CD8-positive, alpha-beta memory T cell (primary cell): ENCODE measurements at regions of chr10 and their contacts with region 1.

Region 1: GRCh38 chr10:44386546-44387052 is 1.7 kb upstream of the CXCL12 start:
- DNase-seq: peak in 4 of 5 donors; percentile 7 to 17 (median 12)
- H3K4me3 ChIP-seq: no peak overlapping the region
- H3K4me3 Mint-ChIP-seq: no peak overlapping the region
- H3K27ac ChIP-seq: no peak overlapping the region
- H3K27ac Mint-ChIP-seq: no peak overlapping the region
- H3K4me1 ChIP-seq: no peaks in the 10 kb centered on the region
- H3K4me1 Mint-ChIP-seq: peaks cover 2 to 6% (median 4%) of the 10 kb centered on the region in 3 donors
- H3K27me3 ChIP-seq: peaks cover 3% of the 10 kb centered on the region
- H3K27me3 Mint-ChIP-seq: peaks cover 30 to 40% of the 10 kb centered on the region in 2 donors

Region 2: GRCh38 chr10:43689955-43690771 is 696.4 kb before region 1 on chr10:
- CTCF ChIA-PET with region 1: interaction called, 24 read pairs
- POLR2A ChIA-PET with region 1: no interaction called
- DNase-seq: peak; percentile 73 to 85 (median 80)
- H3K4me3 ChIP-seq: peak overlapping the region; percentile 91
- H3K4me3 Mint-ChIP-seq: peak overlapping the region; percentile 88 to 95 (median 92)
- H3K27ac ChIP-seq: peak overlapping the region; percentile 45
- H3K27ac Mint-ChIP-seq: peak overlapping the region in 5 of 8 donors; percentile 65 to 97 (median 78)
- H3K4me1 ChIP-seq: no peaks in the 10 kb centered on the region
- H3K4me1 Mint-ChIP-seq: peaks cover 3 to 12% (median 11%) of the 10 kb centered on the region in 3 donors
- H3K27me3 ChIP-seq: no peaks in the 10 kb centered on the region
- H3K27me3 Mint-ChIP-seq: peaks cover 12 to 19% of the 10 kb centered on the region in 2 donors

Region 3: GRCh38 chr10:44364566-44364965 is 22.0 kb before region 1 on chr10:
- CTCF ChIA-PET with region 1: no interaction called
- POLR2A ChIA-PET with region 1: no interaction called
- DNase-seq: no peak
- H3K4me3 ChIP-seq: no peak overlapping the region
- H3K4me3 Mint-ChIP-seq: no peak overlapping the region
- H3K27ac ChIP-seq: no peak overlapping the region
- H3K27ac Mint-ChIP-seq: no peak overlapping the region
- H3K4me1 ChIP-seq: no peaks in the 10 kb centered on the region
- H3K4me1 Mint-ChIP-seq: no peaks in the 10 kb centered on the region
- H3K27me3 ChIP-seq: no peaks in the 10 kb centered on the region
- H3K27me3 Mint-ChIP-seq: peaks cover 5 to 11% of the 10 kb centered on the region in 2 donors